PC-3 (cell line): ENCODE measurements at regions of chr5 and their contacts with region 1.

Region 1: DNA sequence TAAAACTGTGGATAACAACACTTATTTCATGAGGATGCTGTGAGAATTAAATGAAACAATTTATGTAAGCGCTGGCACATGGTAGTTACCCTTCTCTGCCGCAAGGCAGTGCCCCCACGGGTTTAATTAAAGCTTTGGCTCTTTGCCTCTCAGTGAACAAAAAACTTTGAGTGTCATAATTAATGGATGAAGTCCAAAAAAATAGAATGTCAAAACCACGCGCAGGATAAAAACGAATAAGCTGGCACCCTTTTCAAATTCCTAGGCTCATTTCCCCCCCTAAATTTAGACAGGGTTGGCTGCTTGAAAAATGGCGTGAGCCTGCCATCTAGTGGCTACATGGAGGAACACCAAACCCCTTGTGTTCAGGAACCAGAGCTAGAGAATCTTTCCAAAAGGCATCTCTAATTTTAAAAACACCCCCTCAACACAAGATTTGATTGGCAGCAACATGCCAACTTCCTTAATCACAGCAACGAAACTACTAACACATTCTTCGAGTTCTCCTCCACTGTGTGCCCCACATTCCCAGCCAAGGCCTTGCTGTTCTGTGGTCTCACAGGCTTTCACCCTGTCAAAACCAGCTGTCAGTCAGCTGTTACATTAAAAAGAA is 29.0 kb upstream of the CCNG1 start:
- DNase-seq: peak; percentile 71
- ATAC-seq: peak; percentile 76
- H3K4me3 ChIP-seq: peak overlapping the region; percentile 39; the same call in 1 of the 2 replicates
- H3K27ac ChIP-seq: no peak overlapping the region
- H3K4me1 ChIP-seq: peaks cover 14% of the 10 kb centered on the region
- H3K27me3 ChIP-seq: no peaks in the 10 kb centered on the region
- CTCF ChIP-seq: peak; percentile 98

Region 2: DNA sequence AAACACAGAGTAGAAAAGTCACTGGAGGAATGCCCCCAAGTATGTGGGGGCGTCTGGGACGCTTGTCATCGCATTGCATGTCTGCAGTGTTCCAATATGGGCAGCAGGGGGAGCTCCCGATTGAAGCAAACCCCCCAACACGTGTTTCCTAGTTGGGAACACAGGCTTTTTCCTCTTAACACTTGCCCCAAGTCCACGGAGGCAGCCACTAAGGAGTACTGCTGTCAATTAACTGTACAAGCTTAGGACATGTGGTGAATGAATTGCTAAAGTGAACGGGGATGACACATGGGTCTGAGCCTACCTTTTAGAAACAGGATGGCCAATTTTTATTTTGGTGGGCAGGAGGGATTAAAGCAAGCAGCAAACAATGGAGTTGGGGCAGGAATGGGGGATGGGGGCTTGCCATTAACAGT is 1864.1 kb before region 1 on chr5:
- CTCF ChIA-PET with region 1: no interaction called
- POLR2A ChIA-PET with region 1: no interaction called
- intact Hi-C with region 1: loop called (anchors 5 kb)
- DNase-seq: peak; percentile 33
- ATAC-seq: no peak
- H3K4me3 ChIP-seq: no peak overlapping the region
- H3K27ac ChIP-seq: no peak overlapping the region
- H3K4me1 ChIP-seq: no peaks in the 10 kb centered on the region
- H3K27me3 ChIP-seq: no peaks in the 10 kb centered on the region
- CTCF ChIP-seq: peak; percentile 78

Region 3: GRCh38 chr5:163079618-163080017 is 328.8 kb before region 1 on chr5:
- CTCF ChIA-PET with region 1: interaction called, 6 read pairs
- POLR2A ChIA-PET with region 1: no interaction called
- intact Hi-C with region 1: loop called (anchors 1 kb)
- DNase-seq: peak; percentile 40
- ATAC-seq: peak; percentile 53; the same call in 1 of the 2 replicates
- H3K4me3 ChIP-seq: no peak overlapping the region
- H3K27ac ChIP-seq: no peak overlapping the region
- H3K4me1 ChIP-seq: no peaks in the 10 kb centered on the region
- H3K27me3 ChIP-seq: no peaks in the 10 kb centered on the region
- CTCF ChIP-seq: peak; percentile 84

Region 4: DNA sequence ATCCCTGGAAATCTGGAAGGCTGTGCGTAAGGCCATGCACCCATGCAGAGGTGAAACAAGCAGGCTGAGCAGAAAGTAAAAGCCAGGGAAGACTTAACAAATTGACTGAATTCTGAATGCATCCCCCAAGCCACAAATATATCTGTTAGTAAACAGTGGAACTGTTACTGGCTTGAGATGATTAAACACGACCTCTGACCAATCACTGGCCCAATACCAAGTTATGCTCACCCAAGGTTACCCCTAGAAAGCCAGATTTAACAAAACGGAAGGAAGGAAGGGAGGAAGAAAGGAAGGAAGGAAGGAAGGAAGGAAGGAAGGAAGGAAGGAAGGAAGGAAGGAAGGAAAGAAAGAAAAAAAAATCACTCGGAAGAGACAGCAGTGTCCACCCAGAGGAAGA is 186.8 kb before region 1 on chr5:
- CTCF ChIA-PET with region 1: no interaction called
- POLR2A ChIA-PET with region 1: no interaction called
- intact Hi-C with region 1: no loop called
- DNase-seq: no peak
- ATAC-seq: no peak
- H3K4me3 ChIP-seq: no peak overlapping the region
- H3K27ac ChIP-seq: no peak overlapping the region
- H3K4me1 ChIP-seq: no peaks in the 10 kb centered on the region
- H3K27me3 ChIP-seq: peaks cover 23% of the 10 kb centered on the region
- CTCF ChIP-seq: no peak

Region 5: DNA sequence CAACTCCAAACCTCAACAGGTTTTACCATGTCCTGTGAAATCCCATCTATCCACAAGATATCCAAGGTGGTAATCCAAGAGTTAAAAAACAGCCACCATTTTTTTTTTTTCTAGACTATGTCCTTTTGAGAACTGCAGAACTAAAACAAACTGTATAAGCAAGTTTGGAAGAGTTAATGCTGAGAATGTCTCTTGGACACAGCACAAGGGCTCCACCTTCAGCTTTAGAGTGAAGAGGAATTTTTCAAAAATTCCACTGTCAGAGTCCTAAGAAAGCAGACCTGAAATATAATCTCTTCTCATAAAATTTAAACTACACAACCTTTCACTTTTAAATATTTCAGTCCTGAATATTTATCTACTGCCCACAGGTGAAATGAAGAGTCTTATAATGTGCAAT is 138.8 kb before region 1 on chr5:
- CTCF ChIA-PET with region 1: no interaction called
- POLR2A ChIA-PET with region 1: no interaction called
- intact Hi-C with region 1: loop called (anchors 2 kb)
- DNase-seq: peak; percentile 77
- ATAC-seq: peak; percentile 93
- H3K4me3 ChIP-seq: peak overlapping the region; percentile 27; the same call in 1 of the 2 replicates
- H3K27ac ChIP-seq: no peak overlapping the region
- H3K4me1 ChIP-seq: peaks cover 18% of the 10 kb centered on the region
- H3K27me3 ChIP-seq: no peaks in the 10 kb centered on the region
- CTCF ChIP-seq: peak; percentile 77

Region 6: DNA sequence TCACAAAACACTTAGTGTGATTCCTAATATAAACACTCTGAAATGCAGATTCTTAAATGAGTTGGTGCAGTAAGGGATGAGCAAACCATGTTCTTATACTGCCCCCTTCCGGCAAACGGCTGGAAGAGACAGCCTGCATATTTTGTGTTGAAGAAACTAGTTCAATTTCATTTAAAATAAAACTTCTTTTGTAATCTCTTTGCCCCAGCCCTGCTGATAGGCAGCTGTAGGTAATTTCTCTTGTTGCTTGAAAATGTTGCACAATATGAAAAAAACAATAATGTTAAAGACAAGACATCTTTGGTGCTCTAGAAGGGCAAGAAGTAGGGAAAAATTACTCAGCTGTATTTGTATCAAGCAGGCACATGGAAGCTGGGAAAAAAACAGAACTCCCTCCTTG is 60.7 kb before region 1 on chr5:
- CTCF ChIA-PET with region 1: interaction called, 5 read pairs
- POLR2A ChIA-PET with region 1: no interaction called
- intact Hi-C with region 1: loop called (anchors 1 kb)
- DNase-seq: peak; percentile 82
- ATAC-seq: peak; percentile 85
- H3K4me3 ChIP-seq: no peak overlapping the region
- H3K27ac ChIP-seq: no peak overlapping the region
- H3K4me1 ChIP-seq: peaks cover 10% of the 10 kb centered on the region
- H3K27me3 ChIP-seq: no peaks in the 10 kb centered on the region
- CTCF ChIP-seq: peak; percentile 94

Region 7: DNA sequence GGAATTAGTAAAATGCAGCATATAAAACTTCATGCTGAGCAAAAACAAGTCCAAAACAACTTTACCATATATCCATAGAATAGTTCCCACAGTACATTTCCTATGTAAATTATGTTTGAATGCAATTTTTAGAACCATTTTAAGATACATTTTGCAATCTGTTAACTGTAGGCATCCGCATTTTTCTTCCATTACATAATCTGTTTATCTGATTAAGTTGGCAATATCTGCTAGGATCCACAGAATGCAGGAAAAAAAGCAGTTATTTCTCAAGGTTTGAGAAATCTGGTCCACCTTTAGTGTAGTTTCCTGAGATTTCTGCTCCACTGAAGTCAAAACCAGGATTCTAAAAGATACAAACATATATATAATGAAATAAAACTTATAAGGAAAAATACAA is 45.3 kb after region 1 on chr5:
- CTCF ChIA-PET with region 1: no interaction called
- POLR2A ChIA-PET with region 1: no interaction called
- intact Hi-C with region 1: no loop called
- DNase-seq: no peak
- ATAC-seq: no peak
- H3K4me3 ChIP-seq: no peak overlapping the region
- H3K27ac ChIP-seq: no peak overlapping the region
- H3K4me1 ChIP-seq: peaks cover 3% of the 10 kb centered on the region; the same call in 1 of the 2 replicates
- H3K27me3 ChIP-seq: no peaks in the 10 kb centered on the region
- CTCF ChIP-seq: no peak